ENCODE measurements at regions of chr15 and their contacts with region 1.

Region 1: DNA sequence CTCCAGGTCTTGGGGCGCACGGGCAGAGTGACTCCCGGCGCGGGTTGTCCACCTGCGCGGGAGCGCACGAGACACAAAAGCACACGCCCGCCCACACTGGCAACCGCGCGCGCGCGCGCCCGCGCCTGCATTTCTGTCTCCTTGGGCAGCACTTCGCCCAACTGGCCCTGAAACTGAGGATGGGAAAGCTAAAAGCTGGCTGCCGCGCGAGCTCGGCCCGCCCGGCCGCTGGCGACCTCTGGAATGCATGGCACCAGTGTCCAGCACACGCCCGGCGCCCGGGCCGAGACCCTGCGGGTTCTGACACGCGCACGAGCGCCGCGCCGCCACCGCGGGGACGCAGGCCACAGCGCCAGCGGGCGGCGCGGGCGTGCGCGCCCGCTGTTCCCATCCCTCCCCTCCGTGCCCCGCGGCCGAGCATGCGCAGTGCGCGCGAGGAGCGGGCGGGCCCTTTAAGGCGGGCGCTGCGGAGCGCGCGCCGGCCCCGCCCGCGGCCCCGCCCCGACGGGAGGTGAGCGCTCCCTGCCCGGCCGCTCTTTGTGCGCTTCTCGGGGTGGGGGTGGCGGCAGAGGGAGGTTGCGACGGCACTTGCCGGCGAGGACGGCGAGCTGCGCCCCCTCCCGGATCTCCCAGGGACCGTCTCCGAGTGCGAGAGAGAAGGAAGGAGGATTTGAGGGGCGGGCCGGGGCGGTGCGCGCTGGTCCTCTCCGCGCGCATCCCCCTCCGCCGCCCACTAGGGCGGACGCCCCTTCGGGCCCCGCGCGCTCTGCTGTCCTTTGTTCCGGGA is 1.0 kb upstream of the MEX3B start:
- DNase-seq: peak; percentile 87
- H3K4me3 Mint-ChIP-seq: peak overlapping the region; percentile 91
- H3K27ac Mint-ChIP-seq: no peak overlapping the region
- H3K4me1 Mint-ChIP-seq: no peaks in the 10 kb centered on the region
- H3K27me3 Mint-ChIP-seq: peaks cover 18% of the 10 kb centered on the region
- CTCF ChIP-seq: peak; percentile 52

Region 2: DNA sequence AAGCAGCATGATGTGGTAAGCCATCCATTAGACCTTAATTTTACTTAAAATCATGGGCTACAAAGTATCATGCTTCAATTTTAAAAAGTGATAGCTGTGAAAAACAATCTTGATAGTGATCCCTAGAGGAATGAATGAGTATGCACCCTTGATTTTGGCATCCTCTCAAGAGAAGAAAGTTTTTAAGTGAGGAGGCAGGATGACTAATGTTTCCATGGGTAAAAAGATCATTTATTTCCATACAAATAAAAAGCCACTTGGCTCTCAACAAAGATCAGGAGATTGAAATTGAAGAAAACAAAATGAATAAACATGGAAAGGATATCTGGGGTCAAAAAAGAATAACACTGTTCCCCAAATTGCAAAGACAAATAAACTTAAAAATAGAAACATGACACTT is 306.4 kb before region 1 on chr15:
- CTCF ChIA-PET with region 1: no interaction called
- POLR2A ChIA-PET with region 1: no interaction called
- intact Hi-C with region 1: no loop called
- DNase-seq: no peak
- H3K4me3 Mint-ChIP-seq: no peak overlapping the region
- H3K27ac Mint-ChIP-seq: no peak overlapping the region
- H3K4me1 Mint-ChIP-seq: peaks cover 6% of the 10 kb centered on the region
- H3K27me3 Mint-ChIP-seq: no peaks in the 10 kb centered on the region
- CTCF ChIP-seq: no peak

Region 3: GRCh38 chr15:81809543-81809942 is 237.3 kb before region 1 on chr15:
- CTCF ChIA-PET with region 1: no interaction called
- POLR2A ChIA-PET with region 1: no interaction called
- intact Hi-C with region 1: loop called (anchors 5 kb)
- DNase-seq: peak; percentile 24
- H3K4me3 Mint-ChIP-seq: no peak overlapping the region
- H3K27ac Mint-ChIP-seq: no peak overlapping the region
- H3K4me1 Mint-ChIP-seq: no peaks in the 10 kb centered on the region
- H3K27me3 Mint-ChIP-seq: no peaks in the 10 kb centered on the region
- CTCF ChIP-seq: no peak

Region 4: GRCh38 chr15:81839387-81839786 is 207.5 kb before region 1 on chr15:
- CTCF ChIA-PET with region 1: no interaction called
- POLR2A ChIA-PET with region 1: no interaction called
- intact Hi-C with region 1: no loop called
- DNase-seq: no peak
- H3K4me3 Mint-ChIP-seq: no peak overlapping the region
- H3K27ac Mint-ChIP-seq: no peak overlapping the region
- H3K4me1 Mint-ChIP-seq: no peaks in the 10 kb centered on the region
- H3K27me3 Mint-ChIP-seq: no peaks in the 10 kb centered on the region
- CTCF ChIP-seq: no peak

Region 5: DNA sequence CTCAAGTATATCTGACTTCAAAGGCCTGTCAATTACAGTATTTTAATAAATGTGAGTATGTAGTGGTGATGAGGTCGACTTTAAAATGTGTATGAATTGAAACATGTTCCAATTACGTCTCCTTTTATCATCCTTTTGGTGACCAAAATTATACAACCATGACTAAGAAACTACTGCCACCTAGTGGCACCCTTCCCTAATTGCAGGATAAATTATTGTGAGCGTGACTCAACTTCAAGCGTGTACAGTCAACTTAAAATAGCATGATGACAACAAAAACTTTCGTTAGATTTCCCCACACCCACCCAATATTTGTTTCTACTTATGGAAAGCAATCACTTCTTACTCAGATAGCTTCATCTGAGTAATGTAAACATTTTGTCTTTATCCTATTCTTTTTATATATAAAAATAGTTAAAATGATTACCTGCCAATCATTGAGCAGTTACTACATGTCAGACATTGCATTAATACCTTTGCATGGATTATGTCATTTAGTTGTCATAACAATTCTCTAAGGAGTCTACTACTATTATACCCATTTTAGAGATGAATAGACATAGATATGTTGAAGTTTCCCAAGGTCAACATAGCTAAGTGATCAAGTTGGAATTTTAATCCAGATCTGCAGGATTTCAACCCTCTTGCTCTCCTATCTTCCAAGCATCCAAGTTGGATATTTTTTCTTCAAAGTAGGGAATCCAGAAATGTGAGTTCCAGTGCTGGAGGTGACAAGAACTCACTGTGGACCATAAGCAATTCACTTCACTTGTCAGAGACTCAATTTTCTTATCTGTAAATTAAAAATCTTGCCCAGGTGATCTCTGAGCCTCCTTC is 107.0 kb before region 1 on chr15:
- CTCF ChIA-PET with region 1: no interaction called
- POLR2A ChIA-PET with region 1: no interaction called
- intact Hi-C with region 1: loop called (anchors 1 kb)
- DNase-seq: peak; percentile 69
- H3K4me3 Mint-ChIP-seq: no peak overlapping the region
- H3K27ac Mint-ChIP-seq: no peak overlapping the region
- H3K4me1 Mint-ChIP-seq: peaks cover 10% of the 10 kb centered on the region
- H3K27me3 Mint-ChIP-seq: no peaks in the 10 kb centered on the region
- CTCF ChIP-seq: peak; percentile 79

Region 6: DNA sequence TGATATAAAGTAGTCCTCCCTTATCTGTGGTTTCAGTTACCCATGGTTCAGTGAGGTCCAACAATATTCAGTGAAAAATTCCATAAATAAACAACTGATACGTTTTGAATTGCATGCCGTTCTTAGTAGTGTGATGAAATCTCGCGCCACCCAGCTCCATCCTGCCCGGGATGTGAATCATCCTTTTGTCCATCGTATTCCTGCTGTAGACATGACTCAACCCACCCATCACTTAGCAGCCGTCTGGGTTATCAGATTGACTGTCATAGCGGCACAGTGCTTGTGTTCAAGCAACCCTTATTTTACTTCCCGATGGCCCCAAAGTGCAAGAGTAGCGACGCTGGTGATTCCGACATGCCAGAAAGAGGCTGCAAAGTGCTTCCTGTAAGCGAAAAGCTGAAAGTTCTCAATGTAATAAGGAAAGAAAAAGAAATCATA is 46.9 kb after region 1 on chr15:
- CTCF ChIA-PET with region 1: no interaction called
- POLR2A ChIA-PET with region 1: interaction called, 4 read pairs
- intact Hi-C with region 1: loop called (anchors 1 kb)
- DNase-seq: peak; percentile 90
- H3K4me3 Mint-ChIP-seq: peak overlapping the region; percentile 3
- H3K27ac Mint-ChIP-seq: peak overlapping the region; percentile 76
- H3K4me1 Mint-ChIP-seq: peaks cover 8% of the 10 kb centered on the region
- H3K27me3 Mint-ChIP-seq: no peaks in the 10 kb centered on the region
- CTCF ChIP-seq: no peak

Region 7: DNA sequence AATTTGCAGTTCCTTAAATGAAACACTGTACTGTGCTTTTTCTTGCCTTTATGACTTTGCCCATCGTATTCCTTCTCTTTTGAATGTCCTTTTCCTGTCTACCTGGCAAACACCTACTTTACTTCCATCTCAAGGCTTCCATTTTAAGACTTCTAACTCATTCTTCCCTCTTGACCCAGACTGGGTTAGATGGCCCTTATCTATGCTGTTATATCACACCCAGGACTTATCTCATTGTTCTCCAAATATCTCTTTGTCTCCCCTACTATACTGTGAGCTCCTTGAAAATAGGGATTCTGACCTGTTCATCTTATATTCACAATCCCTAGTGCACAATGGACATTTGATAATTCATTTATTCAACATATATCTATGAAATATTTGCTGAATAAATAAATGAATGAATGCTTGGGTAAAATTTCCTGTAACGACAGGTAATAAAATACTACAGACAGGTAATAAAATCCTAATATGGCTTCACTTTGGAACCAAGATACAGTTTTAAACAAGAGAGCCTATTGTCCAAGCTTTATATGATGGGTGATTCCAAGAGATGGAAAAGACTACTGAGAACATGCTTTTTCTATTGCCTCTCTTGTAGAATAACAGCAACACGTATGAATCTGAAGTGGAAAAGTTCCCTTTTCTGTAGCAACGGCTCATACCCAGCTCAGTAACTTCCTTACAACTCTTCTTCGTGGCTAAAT is 193.0 kb after region 1 on chr15:
- CTCF ChIA-PET with region 1: no interaction called
- POLR2A ChIA-PET with region 1: no interaction called
- intact Hi-C with region 1: no loop called
- DNase-seq: no peak
- H3K4me3 Mint-ChIP-seq: no peak overlapping the region
- H3K27ac Mint-ChIP-seq: peak overlapping the region; percentile 72
- H3K4me1 Mint-ChIP-seq: no peaks in the 10 kb centered on the region
- H3K27me3 Mint-ChIP-seq: no peaks in the 10 kb centered on the region
- CTCF ChIP-seq: no peak